ENCODE measurements at regions of chr7 and their contacts with region 1.

Region 1: DNA sequence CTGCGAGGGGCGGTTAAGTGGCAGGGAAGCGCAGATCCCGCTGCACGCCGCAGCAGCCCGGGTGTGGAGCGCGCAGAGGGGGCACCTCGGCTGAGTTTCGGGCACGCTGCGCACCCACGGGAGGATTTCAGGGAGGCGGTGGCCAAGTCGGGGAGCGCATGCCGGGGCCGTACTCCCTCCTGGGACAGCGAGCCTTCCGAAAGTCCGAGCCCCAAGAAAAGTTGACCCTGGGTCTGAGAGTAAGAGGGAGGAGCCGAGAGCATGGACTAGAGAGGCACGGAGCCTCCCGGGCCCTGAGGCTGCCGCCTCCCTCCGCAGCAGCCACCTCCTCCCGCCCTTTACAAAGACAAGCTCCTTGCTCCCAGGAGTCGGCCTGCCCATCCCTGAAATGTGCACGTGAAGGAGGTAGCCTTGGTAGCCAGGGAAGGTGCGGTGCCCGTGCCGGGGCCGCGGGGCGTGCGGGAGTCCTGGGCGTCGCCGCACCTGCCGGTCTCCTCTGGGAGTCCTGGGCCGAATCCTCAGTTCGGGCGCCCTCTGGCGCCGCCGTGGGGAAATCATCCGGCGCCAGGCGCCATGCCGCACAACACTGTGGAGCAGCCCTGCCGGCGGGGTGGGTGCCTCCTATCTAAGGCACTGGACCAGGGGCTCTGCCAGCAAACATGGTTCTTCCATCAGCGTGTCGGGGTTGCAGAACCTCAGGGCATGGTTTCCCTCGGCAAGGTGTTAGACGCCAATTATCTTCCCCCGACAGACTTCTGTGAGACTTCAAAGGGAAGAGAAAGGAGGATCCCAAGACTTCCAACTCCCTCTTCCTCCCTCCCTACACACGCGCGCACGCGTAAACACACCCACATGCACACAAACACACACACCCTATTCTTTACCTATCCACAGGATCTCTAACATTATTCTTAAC is 104.0 kb downstream of the TRIL start:
- DNase-seq: peak; percentile 96
- H3K4me3 ChIP-seq: peak overlapping the region; percentile 58 to 64
- H3K27ac ChIP-seq: no peak overlapping the region
- H3K4me1 ChIP-seq: peaks cover 4 to 9% of the 10 kb centered on the region in 2 experiments; a peak in 2 of 4 replicates
- H3K27me3 ChIP-seq: peaks cover 27% of the 10 kb centered on the region; the same call in 1 of the 2 replicates
- CTCF ChIP-seq: peak; percentile 97
- EP300 ChIP-seq: no peak
- RAD21 ChIP-seq: peak; percentile 95

Region 2: DNA sequence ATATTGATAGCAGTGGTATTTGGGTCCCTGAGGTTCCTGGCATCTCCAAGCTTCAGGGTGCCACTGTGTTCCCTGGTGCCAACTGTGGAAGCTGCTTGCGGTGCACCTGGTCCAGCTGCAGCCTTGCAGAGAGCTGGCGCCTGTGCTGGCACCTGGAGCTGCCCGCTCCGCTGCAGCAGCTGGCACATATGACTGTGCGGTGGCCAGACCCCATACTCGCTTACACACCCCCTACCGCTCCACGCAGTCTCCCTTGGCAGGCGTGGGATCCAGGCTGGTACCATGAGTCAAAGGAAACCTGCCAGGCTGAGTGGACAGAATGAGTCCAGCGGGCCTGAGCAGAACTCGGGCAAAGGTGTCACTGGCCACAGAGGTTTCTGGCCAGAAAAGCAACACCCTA is 583.6 kb before region 1 on chr7:
- CTCF ChIA-PET with region 1: no interaction called
- POLR2A ChIA-PET with region 1: no interaction called
- DNase-seq: no peak
- H3K4me3 ChIP-seq: no peak overlapping the region
- H3K27ac ChIP-seq: no peak overlapping the region
- H3K4me1 ChIP-seq: peaks cover 0 to 9% of the 10 kb centered on the region in 2 experiments; a peak in 2 of 4 replicates
- H3K27me3 ChIP-seq: no peaks in the 10 kb centered on the region; the same call in 1 of the 2 replicates
- CTCF ChIP-seq: no peak
- EP300 ChIP-seq: no peak
- RAD21 ChIP-seq: no peak

Region 3: GRCh38 chr7:28364082-28364481 is 490.0 kb before region 1 on chr7:
- CTCF ChIA-PET with region 1: interaction called, 27 read pairs
- POLR2A ChIA-PET with region 1: no interaction called
- DNase-seq: no peak
- H3K4me3 ChIP-seq: no peak overlapping the region
- H3K27ac ChIP-seq: no peak overlapping the region
- H3K4me1 ChIP-seq: no peaks in the 10 kb centered on the region
- H3K27me3 ChIP-seq: no peaks in the 10 kb centered on the region
- CTCF ChIP-seq: peak; percentile 45
- EP300 ChIP-seq: no peak
- RAD21 ChIP-seq: no peak

Region 4: DNA sequence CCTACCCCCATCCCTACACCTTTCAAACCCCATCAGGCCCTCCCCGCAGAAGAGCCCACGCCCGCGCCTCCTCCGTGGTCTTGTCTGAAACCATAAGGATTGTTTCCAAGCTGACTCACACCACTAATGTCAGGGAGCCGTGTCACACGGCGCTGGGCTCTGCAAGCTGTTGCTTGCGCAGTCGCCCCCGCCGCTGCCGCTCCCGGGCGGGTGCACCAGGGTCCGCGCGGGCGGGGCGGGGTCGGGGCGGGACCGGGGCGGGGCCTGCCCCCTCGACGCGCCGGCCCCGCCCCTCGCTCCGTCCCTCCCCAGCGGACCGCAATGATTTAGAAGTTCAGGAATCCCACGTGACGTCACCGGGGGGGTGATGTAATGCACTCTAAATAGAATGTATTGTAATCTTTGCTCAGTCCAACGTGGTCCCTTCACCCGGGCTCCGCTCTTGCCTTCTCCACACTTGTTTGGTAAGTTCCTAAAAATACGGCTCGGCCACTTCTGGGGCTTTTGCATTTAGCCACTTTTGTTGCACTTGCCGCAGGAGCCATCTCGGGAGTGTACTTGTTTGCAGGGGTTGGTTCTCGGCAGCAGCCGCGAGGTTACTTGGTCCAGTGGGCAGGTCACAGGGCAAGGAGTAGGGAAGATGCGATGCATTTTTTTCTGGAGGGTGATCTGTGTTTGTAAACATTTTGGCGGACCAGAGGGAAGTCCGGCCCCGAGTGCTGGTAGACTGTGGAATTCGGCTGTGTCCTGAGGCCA is 445.0 kb before region 1 on chr7:
- CTCF ChIA-PET with region 1: interaction called, 13 read pairs
- POLR2A ChIA-PET with region 1: no interaction called
- DNase-seq: peak; percentile 95
- H3K4me3 ChIP-seq: peak overlapping the region; percentile 55 to 77
- H3K27ac ChIP-seq: peak overlapping the region in 1 of 2 experiments; percentile 42; a peak in 2 of 4 replicates
- H3K4me1 ChIP-seq: peaks cover 3 to 24% of the 10 kb centered on the region in 2 experiments; a peak in 3 of 4 replicates
- H3K27me3 ChIP-seq: no peaks in the 10 kb centered on the region; the same call in 1 of the 2 replicates
- CTCF ChIP-seq: no peak
- EP300 ChIP-seq: no peak
- RAD21 ChIP-seq: no peak

Region 5: DNA sequence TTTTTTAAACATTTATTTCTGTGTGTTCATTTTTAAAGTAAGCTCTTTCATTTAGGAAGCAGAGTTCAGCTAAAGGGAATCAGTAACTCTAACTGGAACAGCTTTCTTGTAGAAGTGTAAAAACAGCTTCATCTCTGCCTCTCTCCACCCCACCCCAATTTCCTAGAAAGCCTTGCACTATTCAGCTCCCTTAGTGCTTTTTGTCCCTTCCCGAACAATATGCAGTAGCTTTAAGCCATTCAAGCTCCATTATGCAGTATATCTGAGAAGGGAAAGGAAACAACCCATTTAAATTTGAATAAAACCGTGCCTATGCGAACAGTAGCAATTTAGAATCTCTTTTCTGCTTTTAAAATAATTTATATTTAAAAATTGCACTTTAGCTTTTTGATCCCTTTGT is 30.5 kb before region 1 on chr7:
- CTCF ChIA-PET with region 1: interaction called, 12 read pairs
- POLR2A ChIA-PET with region 1: no interaction called
- DNase-seq: no peak
- H3K4me3 ChIP-seq: no peak overlapping the region
- H3K27ac ChIP-seq: no peak overlapping the region
- H3K4me1 ChIP-seq: no peaks in the 10 kb centered on the region
- H3K27me3 ChIP-seq: no peaks in the 10 kb centered on the region
- CTCF ChIP-seq: no peak
- EP300 ChIP-seq: no peak
- RAD21 ChIP-seq: no peak

Region 6: GRCh38 chr7:28840592-28840995 is 13.5 kb before region 1 on chr7:
- CTCF ChIA-PET with region 1: interaction called, 20 read pairs
- POLR2A ChIA-PET with region 1: no interaction called
- DNase-seq: peak; percentile 50
- H3K4me3 ChIP-seq: no peak overlapping the region
- H3K27ac ChIP-seq: no peak overlapping the region
- H3K4me1 ChIP-seq: peaks cover 0 to 14% of the 10 kb centered on the region in 2 experiments; a peak in 2 of 4 replicates
- H3K27me3 ChIP-seq: peaks cover 23% of the 10 kb centered on the region
- CTCF ChIP-seq: peak; percentile 59
- EP300 ChIP-seq: no peak
- RAD21 ChIP-seq: peak; percentile 25; the same call in 1 of the 2 replicates

Region 7: GRCh38 chr7:28872226-28872625 is 18.1 kb after region 1 on chr7:
- CTCF ChIA-PET with region 1: interaction called, 30 read pairs
- POLR2A ChIA-PET with region 1: no interaction called
- DNase-seq: no peak
- H3K4me3 ChIP-seq: no peak overlapping the region
- H3K27ac ChIP-seq: no peak overlapping the region
- H3K4me1 ChIP-seq: no peaks in the 10 kb centered on the region
- H3K27me3 ChIP-seq: peaks cover 5% of the 10 kb centered on the region; the same call in 1 of the 2 replicates
- CTCF ChIP-seq: no peak
- EP300 ChIP-seq: no peak
- RAD21 ChIP-seq: no peak

Region 8: DNA sequence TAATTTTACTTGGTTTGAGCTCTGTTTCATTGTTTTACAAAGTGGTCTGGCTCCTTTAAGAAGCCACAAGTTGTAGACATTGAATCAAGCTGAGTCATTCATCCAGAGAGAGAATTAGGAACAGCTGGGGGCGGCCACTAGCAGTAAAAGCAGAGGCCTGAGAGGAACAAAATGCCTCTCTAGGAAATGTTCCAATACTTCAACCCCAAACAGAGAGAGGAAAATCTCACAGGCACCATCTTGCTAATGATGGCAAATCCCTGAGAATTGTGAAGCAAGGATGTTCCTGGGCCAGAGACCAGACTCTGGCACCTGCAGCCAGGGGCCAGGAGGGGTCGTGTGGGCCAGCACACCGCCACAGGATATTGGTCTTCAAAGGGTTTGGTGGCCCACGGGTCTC is 130.5 kb after region 1 on chr7:
- CTCF ChIA-PET with region 1: no interaction called
- POLR2A ChIA-PET with region 1: no interaction called
- DNase-seq: peak; percentile 42
- H3K4me3 ChIP-seq: no peak overlapping the region; a peak in 1 of 4 replicates
- H3K27ac ChIP-seq: peak overlapping the region; percentile 85 to 97
- H3K4me1 ChIP-seq: peaks cover 26 to 62% of the 10 kb centered on the region in 2 experiments
- H3K27me3 ChIP-seq: no peaks in the 10 kb centered on the region
- CTCF ChIP-seq: no peak
- EP300 ChIP-seq: peak; percentile 58 to 79; a peak in 3 of 4 replicates
- RAD21 ChIP-seq: peak; percentile 21; the same call in 1 of the 2 replicates

Region 9: GRCh38 chr7:29457565-29458011 is 603.5 kb after region 1 on chr7:
- CTCF ChIA-PET with region 1: no interaction called
- POLR2A ChIA-PET with region 1: no interaction called
- DNase-seq: no peak
- H3K4me3 ChIP-seq: no peak overlapping the region
- H3K27ac ChIP-seq: no peak overlapping the region
- H3K4me1 ChIP-seq: peaks cover 0 to 12% of the 10 kb centered on the region in 2 experiments; a peak in 1 of 4 replicates
- H3K27me3 ChIP-seq: no peaks in the 10 kb centered on the region
- CTCF ChIP-seq: no peak
- EP300 ChIP-seq: no peak
- RAD21 ChIP-seq: no peak

Measured in SK-N-SH (cell line).